ENCODE measurements at regions of chr7 and their contacts with region 1.

Region 1: DNA sequence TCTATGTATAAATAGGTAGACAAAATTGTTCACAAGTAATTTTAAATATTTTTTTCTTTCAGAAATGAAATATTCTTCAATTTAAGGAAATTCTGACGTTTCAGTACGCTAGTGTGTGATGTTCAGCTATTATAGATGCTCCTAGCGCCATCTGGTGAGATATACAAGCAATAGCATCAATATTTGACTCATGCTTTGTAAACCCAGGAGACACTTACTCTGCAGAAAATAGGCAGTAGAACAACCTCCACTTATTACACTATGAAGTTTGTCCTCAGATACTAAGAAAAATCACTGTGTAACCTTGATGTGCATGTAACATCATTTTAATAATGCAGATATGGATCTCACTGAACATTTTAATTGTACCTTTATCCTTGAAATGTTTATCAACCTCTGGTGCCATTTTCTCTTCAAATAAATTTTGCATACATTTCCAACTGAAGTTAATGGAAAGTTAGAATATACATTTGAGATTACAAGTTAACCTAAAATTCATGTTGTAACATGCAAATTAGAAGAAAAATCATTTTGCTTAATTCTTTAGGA is 151.5 kb upstream of the FAM3C start:
- DNase-seq: no peak
- H3K4me3 Mint-ChIP-seq: no peak overlapping the region
- H3K27ac Mint-ChIP-seq: no peak overlapping the region
- H3K4me1 Mint-ChIP-seq: peaks cover 29% of the 10 kb centered on the region
- H3K27me3 Mint-ChIP-seq: no peaks in the 10 kb centered on the region

Region 2: GRCh38 chr7:120987683-120988590 is 559.7 kb before region 1 on chr7:
- CTCF ChIA-PET with region 1: no interaction called
- POLR2A ChIA-PET with region 1: no interaction called
- intact Hi-C with region 1: loop called (anchors 5 kb)
- DNase-seq: peak; percentile 88
- H3K4me3 Mint-ChIP-seq: peak overlapping the region; percentile 61
- H3K27ac Mint-ChIP-seq: no peak overlapping the region
- H3K4me1 Mint-ChIP-seq: peaks cover 17% of the 10 kb centered on the region
- H3K27me3 Mint-ChIP-seq: peaks cover 42% of the 10 kb centered on the region

Region 3: DNA sequence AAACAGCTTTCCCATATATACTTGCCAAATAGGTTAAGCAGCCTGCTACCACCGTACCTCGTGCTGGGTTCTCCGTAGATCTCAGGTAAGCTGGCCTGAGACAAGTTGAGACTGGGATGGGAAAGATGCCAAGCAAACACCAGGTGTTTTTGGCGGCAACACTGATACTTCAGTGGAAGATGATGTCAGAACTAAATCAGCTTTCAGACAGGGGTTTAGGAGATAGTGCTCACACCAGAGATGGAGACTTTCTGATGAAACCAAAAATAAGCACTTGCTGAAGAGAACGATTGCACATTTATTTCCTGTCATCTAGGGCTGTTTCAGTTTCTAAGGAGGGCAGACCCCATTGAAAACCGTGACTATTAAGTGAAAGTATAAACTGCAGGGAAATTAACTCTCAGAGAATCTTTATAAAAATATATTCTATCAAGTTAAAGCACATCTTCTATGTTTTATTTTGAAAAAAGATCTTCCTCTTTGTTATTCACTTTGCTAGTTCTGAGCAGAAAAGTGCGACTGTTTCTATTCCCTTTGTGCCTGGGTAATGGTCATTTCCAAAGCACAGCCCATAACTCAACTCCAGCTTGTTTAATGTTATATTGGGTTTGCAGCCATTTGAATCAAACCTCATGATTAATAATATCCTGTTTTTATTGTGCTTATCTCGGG is 409.2 kb before region 1 on chr7:
- CTCF ChIA-PET with region 1: interaction called, 4 read pairs
- POLR2A ChIA-PET with region 1: no interaction called
- intact Hi-C with region 1: loop called (anchors 1 kb)
- DNase-seq: peak; percentile 14
- H3K4me3 Mint-ChIP-seq: peak overlapping the region; percentile 14
- H3K27ac Mint-ChIP-seq: no peak overlapping the region
- H3K4me1 Mint-ChIP-seq: peaks cover 15% of the 10 kb centered on the region
- H3K27me3 Mint-ChIP-seq: peaks cover 2% of the 10 kb centered on the region

Region 4: DNA sequence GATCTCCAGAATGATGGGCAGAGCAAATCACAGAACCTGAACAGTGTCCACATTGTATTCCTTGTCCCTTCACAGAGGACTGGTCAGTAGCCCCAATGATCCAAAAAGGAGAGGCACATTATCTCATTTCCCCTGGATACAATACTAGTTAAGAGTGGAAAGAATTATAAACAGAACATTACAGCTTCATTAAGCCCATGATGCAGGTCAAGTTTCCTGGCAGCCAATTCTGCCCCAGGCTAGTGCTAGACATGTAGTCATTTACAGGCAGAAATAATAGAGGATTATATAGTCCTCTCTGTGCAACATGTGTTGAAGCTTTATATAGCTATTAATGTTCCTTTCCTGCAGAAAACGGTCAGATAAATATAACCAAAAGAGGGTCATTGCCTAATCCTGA is 343.1 kb before region 1 on chr7:
- CTCF ChIA-PET with region 1: no interaction called
- POLR2A ChIA-PET with region 1: no interaction called
- intact Hi-C with region 1: no loop called
- DNase-seq: no peak
- H3K4me3 Mint-ChIP-seq: no peak overlapping the region
- H3K27ac Mint-ChIP-seq: no peak overlapping the region
- H3K4me1 Mint-ChIP-seq: no peaks in the 10 kb centered on the region
- H3K27me3 Mint-ChIP-seq: peaks cover 2% of the 10 kb centered on the region

Region 5: GRCh38 chr7:121366852-121367431 is 180.7 kb before region 1 on chr7:
- CTCF ChIA-PET with region 1: interaction called, 102 read pairs
- POLR2A ChIA-PET with region 1: interaction called, 3 read pairs
- intact Hi-C with region 1: loop called (anchors 1 kb)
- DNase-seq: no peak
- H3K4me3 Mint-ChIP-seq: no peak overlapping the region
- H3K27ac Mint-ChIP-seq: no peak overlapping the region
- H3K4me1 Mint-ChIP-seq: peaks cover 8% of the 10 kb centered on the region
- H3K27me3 Mint-ChIP-seq: no peaks in the 10 kb centered on the region

Region 6: DNA sequence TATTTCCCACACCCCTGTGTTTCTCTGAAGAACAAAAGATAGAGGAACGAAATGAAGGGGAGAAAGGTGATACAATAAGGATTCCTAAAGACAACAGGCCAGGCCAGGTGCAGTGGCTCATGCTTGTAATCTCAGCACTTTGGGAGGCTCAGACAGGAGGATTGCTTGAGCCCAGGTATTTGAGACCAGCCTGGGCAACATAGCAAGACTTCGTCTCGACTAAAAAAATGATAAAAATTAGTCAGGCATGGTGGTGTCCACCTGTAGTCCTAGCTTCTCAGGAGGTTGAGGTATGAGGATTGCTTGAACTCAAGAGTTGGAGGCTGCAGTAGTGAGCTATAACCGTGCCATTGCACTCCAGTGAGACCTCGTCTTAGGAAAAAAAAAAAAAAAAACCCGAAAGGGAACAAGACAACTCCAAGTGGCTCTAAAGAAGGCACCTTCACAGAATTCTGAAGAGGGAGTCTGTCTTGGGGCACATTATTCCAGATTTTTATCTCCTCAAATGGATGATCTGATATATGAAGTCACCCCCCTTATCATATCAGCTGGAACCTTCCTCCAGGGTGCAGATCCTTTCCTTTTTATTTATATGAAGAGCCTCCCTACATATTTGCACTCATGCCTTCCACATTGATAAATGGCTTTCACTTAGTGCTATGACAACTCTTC is 110.0 kb before region 1 on chr7:
- CTCF ChIA-PET with region 1: no interaction called
- POLR2A ChIA-PET with region 1: no interaction called
- intact Hi-C with region 1: loop called (anchors 1 kb)
- DNase-seq: no peak
- H3K4me3 Mint-ChIP-seq: no peak overlapping the region
- H3K27ac Mint-ChIP-seq: peak overlapping the region; percentile 74
- H3K4me1 Mint-ChIP-seq: peaks cover 30% of the 10 kb centered on the region
- H3K27me3 Mint-ChIP-seq: no peaks in the 10 kb centered on the region

Region 7: GRCh38 chr7:121530227-121531174 is 17.1 kb before region 1 on chr7:
- CTCF ChIA-PET with region 1: interaction called, 10 read pairs
- POLR2A ChIA-PET with region 1: interaction called, 14 read pairs
- intact Hi-C with region 1: loop called (anchors 1 kb)
- DNase-seq: peak; percentile 74
- H3K4me3 Mint-ChIP-seq: peak overlapping the region; percentile 21
- H3K27ac Mint-ChIP-seq: peak overlapping the region; percentile 87
- H3K4me1 Mint-ChIP-seq: peaks cover 21% of the 10 kb centered on the region
- H3K27me3 Mint-ChIP-seq: no peaks in the 10 kb centered on the region

Region 8: DNA sequence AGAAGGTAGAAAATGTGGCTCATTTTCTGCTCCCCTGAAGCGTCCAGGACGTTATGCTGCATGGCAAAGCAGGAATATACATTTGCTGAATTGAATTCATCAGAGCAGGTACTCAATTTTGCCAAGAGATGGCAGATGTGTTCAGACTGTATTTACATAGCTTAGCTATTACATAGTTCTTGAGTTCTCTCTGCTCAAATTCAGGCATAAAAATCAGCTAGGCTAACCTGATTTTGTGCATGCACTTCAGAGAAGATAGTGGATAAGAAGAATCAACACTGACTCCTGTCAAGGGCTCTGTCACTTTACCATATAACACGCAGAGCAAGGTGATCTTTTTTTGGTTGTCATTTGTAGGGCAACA is 57.7 kb after region 1 on chr7:
- CTCF ChIA-PET with region 1: no interaction called
- POLR2A ChIA-PET with region 1: no interaction called
- intact Hi-C with region 1: no loop called
- DNase-seq: no peak
- H3K4me3 Mint-ChIP-seq: no peak overlapping the region
- H3K27ac Mint-ChIP-seq: no peak overlapping the region
- H3K4me1 Mint-ChIP-seq: no peaks in the 10 kb centered on the region
- H3K27me3 Mint-ChIP-seq: peaks cover 2% of the 10 kb centered on the region